Cardiac septum (tissue), 1 donor: ENCODE measurements at regions of chr3 and their contacts with region 1.

Region 1: GRCh38 chr3:149377408-149378377 is at the start of gene TM4SF1:
- DNase-seq: peak; percentile 89
- total RNA-seq, gene TM4SF1: 84.7 TPM

Region 2: GRCh38 chr3:149339931-149340309 is 37.8 kb before region 1 on chr3:
- intact Hi-C with region 1: loop called (anchors 2 kb)
- DNase-seq: peak; percentile 91